ENCODE measurements at regions of chr1 and their contacts with region 1.

Region 1: DNA sequence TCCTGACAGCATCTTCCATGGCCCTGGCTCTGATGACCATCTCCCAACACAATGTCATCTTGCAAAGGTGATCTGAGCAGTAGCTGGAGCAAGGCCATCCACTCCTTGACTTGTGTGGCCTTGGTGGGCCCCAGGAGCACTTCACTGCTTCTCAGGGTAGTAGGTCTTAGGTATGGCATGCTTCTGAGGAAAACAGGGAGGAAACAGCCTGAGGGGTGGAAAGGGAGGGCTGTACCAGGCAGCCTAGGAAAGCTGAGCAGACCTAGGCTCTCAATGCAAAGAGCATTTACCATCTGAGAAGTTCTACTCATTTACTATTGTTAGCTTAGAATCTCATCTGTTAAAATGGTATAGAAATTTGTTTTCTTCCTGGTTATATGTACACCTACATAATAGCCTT is 120.8 kb upstream of the NBPF11 start:
- DNase-seq: no peak
- ATAC-seq: no peak
- H3K4me3 Mint-ChIP-seq: no peak overlapping the region
- H3K27ac Mint-ChIP-seq: no peak overlapping the region
- H3K4me1 Mint-ChIP-seq: no peaks in the 10 kb centered on the region
- H3K27me3 Mint-ChIP-seq: peaks cover 25% of the 10 kb centered on the region

Region 2: GRCh38 chr1:148307583-148308190 is 34.8 kb after region 1 on chr1:
- CTCF ChIA-PET with region 1: interaction called, 4 read pairs
- POLR2A ChIA-PET with region 1: no interaction called
- intact Hi-C with region 1: loop called in 1 of 2 experiments (anchors 5 kb)
- DNase-seq: no peak
- ATAC-seq: no peak
- H3K4me3 Mint-ChIP-seq: no peak overlapping the region
- H3K27ac Mint-ChIP-seq: no peak overlapping the region
- H3K4me1 Mint-ChIP-seq: peaks cover 19% of the 10 kb centered on the region
- H3K27me3 Mint-ChIP-seq: peaks cover 50% of the 10 kb centered on the region

Region 3: GRCh38 chr1:148318123-148318903 is 45.4 kb after region 1 on chr1:
- CTCF ChIA-PET with region 1: no interaction called
- POLR2A ChIA-PET with region 1: no interaction called
- intact Hi-C with region 1: loop called in 1 of 2 experiments (anchors 5 kb)
- DNase-seq: peak; percentile 86
- ATAC-seq: peak; percentile 86
- H3K4me3 Mint-ChIP-seq: peak overlapping the region; percentile 78
- H3K27ac Mint-ChIP-seq: peak overlapping the region; percentile 92
- H3K4me1 Mint-ChIP-seq: peaks cover 33% of the 10 kb centered on the region
- H3K27me3 Mint-ChIP-seq: peaks cover 18% of the 10 kb centered on the region

Measured in activated CD4-positive, alpha-beta T cell treated with anti-CD3 and anti-CD28 coated beads for 36 hours (primary cell).